Prostate gland (tissue), 2 donors: ENCODE measurements at regions of chr1 and their contacts with region 1.

Region 1: GRCh38 chr1:214551436-214552173 is at the start of gene PTPN14:
- DNase-seq: peak; percentile 91
- H3K4me3 ChIP-seq: peak within 1 kb of the TSS; percentile 67 to 87
- H3K27ac ChIP-seq: peak within 1 kb of the TSS; percentile 91 to 98
- H3K4me1 ChIP-seq: no peaks in the 10 kb centered on the region
- H3K27me3 ChIP-seq: no peaks in the 10 kb centered on the region
- CTCF ChIP-seq: peak in 2 of 4 experiments; percentile 22 to 42
- POLR2A ChIP-seq: peak; percentile 73
- total RNA-seq, gene PTPN14: 36.6 to 54.0 TPM

Region 2: DNA sequence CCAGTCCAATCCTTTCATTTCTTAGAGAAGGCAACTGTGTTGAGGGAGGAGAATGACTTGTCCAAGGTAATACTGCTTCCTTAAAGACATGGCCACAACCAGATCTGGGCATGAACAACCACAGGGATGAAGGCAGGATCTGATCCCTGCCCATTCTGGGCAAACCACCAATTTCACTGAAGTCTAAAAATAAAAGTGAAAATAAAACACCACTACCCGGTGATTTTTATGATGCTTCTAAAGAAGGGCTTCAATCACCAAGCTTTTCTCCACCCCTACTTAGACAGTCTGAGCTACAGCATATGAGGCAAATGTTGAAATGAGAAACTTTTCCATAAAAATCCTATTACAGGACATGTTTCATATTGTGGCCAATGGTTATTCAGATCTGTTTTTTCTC is 133.2 kb before region 1 on chr1:
- intact Hi-C with region 1: loop called (anchors 2 kb)
- DNase-seq: no peak
- H3K4me3 ChIP-seq: no peak overlapping the region
- H3K27ac ChIP-seq: no peak overlapping the region
- H3K4me1 ChIP-seq: no peaks in the 10 kb centered on the region
- H3K27me3 ChIP-seq: no peaks in the 10 kb centered on the region
- CTCF ChIP-seq: no peak
- POLR2A ChIP-seq: no peak

Region 3: DNA sequence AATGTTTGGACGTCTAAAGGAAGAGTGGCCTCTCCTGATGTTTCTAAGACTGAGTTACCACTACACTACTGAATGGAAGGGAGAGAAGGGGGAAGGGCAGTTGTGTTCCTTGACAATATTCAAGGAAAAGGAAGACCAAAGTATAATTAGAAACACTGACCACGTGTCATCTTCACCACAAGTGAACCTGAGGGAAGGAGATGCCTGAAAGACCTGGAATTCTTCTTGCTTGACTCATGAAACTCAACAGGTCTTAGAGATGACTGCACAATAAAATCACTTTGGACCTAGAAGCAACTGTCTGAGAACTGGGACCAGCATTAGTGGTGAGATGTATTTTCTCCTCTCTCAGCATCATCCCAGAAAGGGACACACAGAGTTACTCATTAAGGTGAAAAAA is 56.9 kb before region 1 on chr1:
- intact Hi-C with region 1: loop called (anchors 5 kb)
- DNase-seq: no peak
- H3K4me3 ChIP-seq: no peak overlapping the region
- H3K27ac ChIP-seq: no peak overlapping the region
- H3K4me1 ChIP-seq: no peaks in the 10 kb centered on the region
- H3K27me3 ChIP-seq: no peaks in the 10 kb centered on the region
- CTCF ChIP-seq: no peak
- POLR2A ChIP-seq: no peak

Region 4: GRCh38 chr1:214525535-214526019 is 26.0 kb before region 1 on chr1:
- intact Hi-C with region 1: no loop called
- DNase-seq: no peak
- H3K4me3 ChIP-seq: no peak overlapping the region
- H3K27ac ChIP-seq: no peak overlapping the region
- H3K4me1 ChIP-seq: no peaks in the 10 kb centered on the region
- H3K27me3 ChIP-seq: no peaks in the 10 kb centered on the region
- CTCF ChIP-seq: no peak
- POLR2A ChIP-seq: no peak